Common myeloid progenitor, CD34-positive (primary cell): ENCODE measurements at regions of chr6 and their contacts with region 1.

Region 1: GRCh38 chr6:134097114-134097707 is 44.8 kb upstream of the SLC2A12 start:
- DNase-seq: peak; percentile 71 to 86 (median 78)
- H3K4me3 ChIP-seq: no peak overlapping the region
- H3K27ac ChIP-seq: no peak overlapping the region
- H3K4me1 ChIP-seq: no peaks in the 10 kb centered on the region
- H3K27me3 ChIP-seq: peaks cover 0 to 10% (median 6%) of the 10 kb centered on the region in 5 experiments

Region 2: DNA sequence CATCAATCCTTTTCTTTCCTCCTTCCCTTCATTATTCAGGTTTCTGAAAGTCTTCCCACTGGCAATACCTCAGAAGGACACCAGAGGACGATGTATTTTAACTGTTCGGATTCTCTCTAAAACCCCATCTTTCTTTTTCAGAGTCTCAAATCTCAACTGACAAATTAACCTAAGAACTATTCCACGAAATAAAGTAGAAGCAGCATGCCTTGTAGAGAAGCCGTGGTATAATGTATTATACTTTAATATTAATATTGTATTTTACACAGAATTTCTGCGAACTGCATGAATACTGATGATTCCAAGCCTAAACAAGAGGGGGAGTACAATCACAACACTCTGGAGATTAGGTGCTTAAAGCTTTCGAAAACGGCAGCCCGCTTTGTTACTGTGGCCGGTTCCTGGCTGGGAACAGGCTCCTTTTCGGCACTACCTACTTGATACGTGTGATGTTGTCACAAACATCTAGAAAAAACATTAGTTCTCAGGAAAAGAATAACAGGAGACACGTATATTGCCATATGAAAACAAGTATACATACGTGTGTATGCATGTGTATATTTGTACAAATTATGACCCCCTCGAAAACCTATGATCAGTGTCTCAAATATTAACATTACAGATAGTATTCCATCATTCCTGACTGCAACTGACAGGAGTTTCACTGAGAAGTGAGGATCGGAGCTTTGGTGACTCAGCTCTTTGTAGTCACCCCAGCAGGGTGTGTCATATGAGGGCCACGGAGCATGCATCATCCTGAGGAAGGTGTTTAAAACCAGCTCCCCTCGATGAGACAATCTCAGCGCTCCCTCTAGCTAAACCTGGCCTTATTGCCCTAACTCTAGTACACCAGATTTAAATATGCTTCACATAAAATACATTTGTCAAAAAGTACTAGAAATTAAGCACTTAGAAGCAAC is 528.0 kb before region 1 on chr6:
- CTCF ChIA-PET with region 1: interaction called, 10 read pairs
- POLR2A ChIA-PET with region 1: no interaction called
- DNase-seq: peak; percentile 19 to 62 (median 51)
- H3K4me3 ChIP-seq: peak overlapping the region in 2 of 7 experiments; percentile 16 to 52
- H3K27ac ChIP-seq: no peak overlapping the region
- H3K4me1 ChIP-seq: peaks cover 0 to 5% (median 1%) of the 10 kb centered on the region in 4 experiments
- H3K27me3 ChIP-seq: peaks cover 12 to 52% (median 17%) of the 10 kb centered on the region in 5 experiments

Region 3: GRCh38 chr6:133916650-133917151 is 180.5 kb before region 1 on chr6:
- CTCF ChIA-PET with region 1: interaction called, 211 read pairs
- POLR2A ChIA-PET with region 1: no interaction called
- DNase-seq: peak; percentile 72 to 76 (median 73)
- H3K4me3 ChIP-seq: peak overlapping the region in 4 of 7 experiments; percentile 20 to 46 (median 25)
- H3K27ac ChIP-seq: no peak overlapping the region
- H3K4me1 ChIP-seq: peaks cover 0 to 11% (median 5%) of the 10 kb centered on the region in 4 experiments
- H3K27me3 ChIP-seq: peaks cover 3 to 27% (median 12%) of the 10 kb centered on the region in 5 experiments

Region 4: GRCh38 chr6:133973109-133973971 is 123.9 kb before region 1 on chr6:
- CTCF ChIA-PET with region 1: interaction called, 50 read pairs
- POLR2A ChIA-PET with region 1: no interaction called
- DNase-seq: peak; percentile 54 to 75 (median 74)
- H3K4me3 ChIP-seq: no peak overlapping the region
- H3K27ac ChIP-seq: no peak overlapping the region
- H3K4me1 ChIP-seq: no peaks in the 10 kb centered on the region
- H3K27me3 ChIP-seq: no peaks in the 10 kb centered on the region

Region 5: GRCh38 chr6:134111062-134111677 is 14.0 kb after region 1 on chr6:
- CTCF ChIA-PET with region 1: interaction called, 72 read pairs
- POLR2A ChIA-PET with region 1: no interaction called
- DNase-seq: peak; percentile 74 to 87 (median 85)
- H3K4me3 ChIP-seq: no peak overlapping the region
- H3K27ac ChIP-seq: no peak overlapping the region
- H3K4me1 ChIP-seq: peaks cover 0 to 2% (median 0%) of the 10 kb centered on the region in 4 experiments
- H3K27me3 ChIP-seq: peaks cover 0 to 14% (median 9%) of the 10 kb centered on the region in 5 experiments